Posterior vena cava (tissue), 2 donors: ENCODE measurements at regions of chr17 and their contacts with region 1.

Region 1: GRCh38 chr17:16962818-16963217 is 9.1 kb downstream of the TNFRSF13B start:
- DNase-seq: peak; percentile 41

Region 2: DNA sequence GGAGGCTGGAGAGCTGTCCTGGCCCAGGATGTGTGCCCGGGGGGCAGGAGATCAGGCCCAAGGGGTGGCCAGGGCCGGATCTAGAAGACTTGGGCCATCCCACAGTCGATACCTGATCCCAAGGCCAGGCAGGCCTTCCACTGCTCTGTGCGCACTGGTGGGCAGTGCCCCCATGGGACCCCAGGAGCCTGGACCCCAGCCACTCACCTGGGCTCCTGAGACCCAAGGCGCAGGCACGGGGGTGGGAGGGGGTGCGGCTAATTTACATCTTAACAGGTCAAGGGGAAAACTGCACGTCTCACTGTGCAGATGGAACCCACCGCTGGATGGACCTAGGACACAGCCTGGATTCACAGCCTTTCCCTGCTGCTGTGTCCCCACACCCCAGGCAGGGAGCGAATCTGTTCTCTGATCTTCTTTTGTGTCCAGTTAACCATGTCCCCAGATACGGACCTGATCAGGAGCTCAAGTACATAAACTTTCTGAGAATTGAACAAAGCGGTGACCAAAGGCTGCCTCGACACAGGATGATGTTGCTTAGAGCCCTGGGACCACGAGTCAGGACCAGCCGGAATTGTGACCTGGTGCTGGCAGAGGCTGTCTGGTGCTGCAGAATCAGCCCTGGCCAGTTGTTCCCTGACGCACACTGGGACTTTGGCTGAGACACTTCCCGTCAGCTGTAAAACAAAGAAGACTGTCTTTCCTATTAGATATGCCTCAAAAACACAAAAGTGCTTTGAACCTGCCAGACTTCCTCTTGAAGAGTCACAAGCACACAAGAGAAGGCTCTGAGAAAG is 51.5 kb before region 1 on chr17:
- intact Hi-C with region 1: loop called in 1 of 2 experiments (anchors 5 kb)
- DNase-seq: peak; percentile 66

Region 3: GRCh38 chr17:16922386-16923104 is 40.3 kb before region 1 on chr17:
- intact Hi-C with region 1: no loop called
- DNase-seq: no peak